Transverse colon (tissue), 4 donors: ENCODE measurements at regions of chr5 and their contacts with region 1.

Region 1: GRCh38 chr5:94976853-94977252 is 308.0 kb downstream of the MCTP1 start:
- DNase-seq: no peak
- H3K4me3 ChIP-seq: no peak overlapping the region
- H3K27ac ChIP-seq: no peak overlapping the region
- H3K4me1 ChIP-seq: no peaks in the 10 kb centered on the region
- H3K27me3 ChIP-seq: no peaks in the 10 kb centered on the region
- CTCF ChIP-seq: no peak
- EP300 ChIP-seq: no peak
- POLR2A ChIP-seq: no peak

Region 2: GRCh38 chr5:94830520-94830919 is 146.3 kb before region 1 on chr5:
- in situ Hi-C with region 1: no loop called
- intact Hi-C with region 1: loop called (anchors 5 kb)
- DNase-seq: no peak
- H3K4me3 ChIP-seq: no peak overlapping the region
- H3K27ac ChIP-seq: no peak overlapping the region
- H3K4me1 ChIP-seq: no peaks in the 10 kb centered on the region
- H3K27me3 ChIP-seq: no peaks in the 10 kb centered on the region
- CTCF ChIP-seq: no peak
- EP300 ChIP-seq: no peak
- POLR2A ChIP-seq: no peak